Gastrocnemius medialis (tissue), 4 donors: ENCODE measurements at regions of chr20 and their contacts with region 1.

Region 1: GRCh38 chr20:3173610-3174441 is 477 bp upstream of the LZTS3 start:
- DNase-seq: peak; percentile 80 to 81
- ATAC-seq: peak; percentile 88 to 94
- H3K4me3 ChIP-seq: peak overlapping the region; percentile 85 to 98 (median 95)
- H3K27ac ChIP-seq: peak overlapping the region; percentile 85 to 95 (median 86)
- H3K4me1 ChIP-seq: peaks cover 5 to 22% of the 10 kb centered on the region in 2 donors
- H3K27me3 ChIP-seq: no peaks in the 10 kb centered on the region
- CTCF ChIP-seq: peak in 4 of 5 experiments; percentile 24 to 40 (median 29)
- POLR2A ChIP-seq: peak in 1 of 2 donors; percentile 22

Region 2: GRCh38 chr20:3045816-3046676 is 127.8 kb before region 1 on chr20 and contains the start of gene MRPS26:
- in situ Hi-C with region 1: loop called in 1 of 4 experiments (anchors 25 kb)
- intact Hi-C with region 1: loop called (anchors 5 kb)
- DNase-seq: peak; percentile 79 to 84
- ATAC-seq: peak; percentile 88 to 92
- H3K4me3 ChIP-seq: peak within 1 kb of the TSS; percentile 86 to 95 (median 92)
- H3K27ac ChIP-seq: peak within 1 kb of the TSS; percentile 87 to 96 (median 93)
- H3K4me1 ChIP-seq: peaks cover 11 to 22% of the 10 kb centered on the region in 2 donors
- H3K27me3 ChIP-seq: no peaks in the 10 kb centered on the region
- CTCF ChIP-seq: no peak
- POLR2A ChIP-seq: peak; percentile 61 to 70
- total RNA-seq, gene MRPS26: 58.7 to 69.8 (median 62.8) TPM

Region 3: GRCh38 chr20:3068986-3069900 is 104.6 kb before region 1 on chr20:
- in situ Hi-C with region 1: loop called in 1 of 4 experiments (anchors 25 kb)
- intact Hi-C with region 1: no loop called
- DNase-seq: peak in 1 of 2 donors; percentile 15
- ATAC-seq: peak; percentile 49 to 83
- H3K4me3 ChIP-seq: no peak overlapping the region
- H3K27ac ChIP-seq: no peak overlapping the region
- H3K4me1 ChIP-seq: no peaks in the 10 kb centered on the region
- H3K27me3 ChIP-seq: peaks cover 13 to 24% (median 19%) of the 10 kb centered on the region in 3 donors
- CTCF ChIP-seq: peak in 1 of 5 experiments; percentile 29
- POLR2A ChIP-seq: no peak

Region 4: DNA sequence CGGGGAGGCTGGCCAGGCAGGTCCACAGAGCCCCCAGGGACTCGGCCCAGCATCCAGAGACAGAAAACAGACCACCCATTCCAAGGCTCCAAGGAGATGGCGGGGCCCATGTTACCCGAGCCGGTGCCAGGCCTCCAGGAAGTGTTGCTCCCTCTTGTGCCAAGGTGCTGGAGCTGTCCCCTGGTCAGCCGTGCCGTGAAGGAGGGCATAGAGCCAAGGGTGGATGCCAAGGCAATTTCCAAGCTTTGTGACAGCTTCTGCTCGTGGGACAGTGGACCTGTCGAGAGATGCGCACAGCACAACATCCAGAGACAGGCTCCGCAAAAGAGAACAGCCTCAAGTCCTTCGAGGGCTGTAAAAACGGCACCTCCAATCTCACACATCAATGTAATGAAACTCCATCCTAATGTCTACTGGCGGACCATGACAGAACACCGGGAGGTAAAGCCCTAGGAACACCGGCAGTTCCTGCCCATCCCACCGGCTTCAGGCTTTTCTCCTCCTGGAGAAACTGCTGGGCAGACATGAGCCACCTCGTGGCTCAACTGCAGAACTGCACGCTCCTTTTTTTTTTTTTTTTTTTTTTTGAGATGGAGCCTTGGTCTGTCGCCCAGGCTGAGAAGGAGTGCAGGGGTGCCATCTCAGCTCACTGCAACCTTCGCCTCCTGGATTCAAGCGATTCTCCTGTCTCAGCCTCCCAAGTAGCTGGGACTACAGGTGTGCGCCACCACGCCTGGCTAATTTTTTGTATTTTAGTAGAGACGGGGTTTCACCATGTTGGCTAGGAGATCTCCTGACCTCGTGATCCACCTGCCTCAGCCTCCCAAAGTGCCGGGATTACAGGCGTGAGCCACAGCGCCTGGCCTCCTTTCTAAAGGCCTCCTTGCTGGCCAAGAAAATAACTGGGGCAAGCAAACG is 58.4 kb before region 1 on chr20:
- in situ Hi-C with region 1: no loop called
- intact Hi-C with region 1: loop called (anchors 1 kb)
- DNase-seq: peak in 1 of 2 donors; percentile 39
- ATAC-seq: peak; percentile 16 to 42
- H3K4me3 ChIP-seq: no peak overlapping the region
- H3K27ac ChIP-seq: no peak overlapping the region
- H3K4me1 ChIP-seq: peaks cover 4 to 16% of the 10 kb centered on the region in 2 donors
- H3K27me3 ChIP-seq: no peaks in the 10 kb centered on the region
- CTCF ChIP-seq: peak; percentile 43 to 82 (median 63)
- POLR2A ChIP-seq: no peak

Region 5: DNA sequence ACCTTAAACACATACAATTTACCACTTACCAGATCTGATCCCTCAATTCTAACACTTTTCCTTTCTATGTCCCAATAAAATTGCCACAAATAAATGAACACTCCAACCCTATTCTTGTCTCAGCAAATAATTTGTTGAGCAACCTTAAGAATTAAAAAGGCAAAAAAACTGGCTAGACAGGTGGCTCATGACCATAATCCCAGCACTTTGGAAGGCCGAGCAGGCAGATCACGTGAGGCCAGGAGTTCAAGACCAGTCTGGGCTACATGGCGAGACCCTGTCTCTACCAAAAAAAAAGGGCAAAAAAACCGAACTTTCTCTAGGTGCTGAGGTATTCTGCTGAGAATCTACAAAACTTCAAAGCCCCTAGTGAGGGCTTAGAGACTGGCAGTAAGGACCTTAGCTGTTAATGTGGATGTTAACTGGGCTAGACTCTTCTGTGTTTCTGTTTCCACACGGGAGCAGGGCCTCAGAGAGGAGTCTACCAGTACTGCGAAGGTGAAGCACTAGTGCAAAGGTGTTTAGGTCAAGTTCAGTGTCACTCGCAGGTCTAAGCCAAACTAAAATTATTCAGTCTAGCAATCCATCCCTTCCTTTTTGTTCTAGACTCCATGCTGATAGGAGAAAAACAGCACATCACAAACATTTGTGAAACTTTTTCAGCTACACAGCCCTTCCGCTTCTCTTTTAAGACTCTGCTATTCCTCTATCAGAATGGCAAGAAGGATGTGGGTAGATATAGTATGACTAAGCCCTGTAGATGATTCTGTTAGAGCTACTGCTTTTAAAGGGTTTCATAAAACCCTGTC is 16.8 kb before region 1 on chr20:
- in situ Hi-C with region 1: no loop called
- intact Hi-C with region 1: loop called (anchors 1 kb)
- DNase-seq: no peak
- ATAC-seq: no peak
- H3K4me3 ChIP-seq: peak overlapping the region; percentile 8 to 98 (median 90)
- H3K27ac ChIP-seq: peak overlapping the region; percentile 63 to 96 (median 92)
- H3K4me1 ChIP-seq: peaks cover 61 to 62% of the 10 kb centered on the region in 2 donors
- H3K27me3 ChIP-seq: no peaks in the 10 kb centered on the region
- CTCF ChIP-seq: no peak
- POLR2A ChIP-seq: no peak

Region 6: DNA sequence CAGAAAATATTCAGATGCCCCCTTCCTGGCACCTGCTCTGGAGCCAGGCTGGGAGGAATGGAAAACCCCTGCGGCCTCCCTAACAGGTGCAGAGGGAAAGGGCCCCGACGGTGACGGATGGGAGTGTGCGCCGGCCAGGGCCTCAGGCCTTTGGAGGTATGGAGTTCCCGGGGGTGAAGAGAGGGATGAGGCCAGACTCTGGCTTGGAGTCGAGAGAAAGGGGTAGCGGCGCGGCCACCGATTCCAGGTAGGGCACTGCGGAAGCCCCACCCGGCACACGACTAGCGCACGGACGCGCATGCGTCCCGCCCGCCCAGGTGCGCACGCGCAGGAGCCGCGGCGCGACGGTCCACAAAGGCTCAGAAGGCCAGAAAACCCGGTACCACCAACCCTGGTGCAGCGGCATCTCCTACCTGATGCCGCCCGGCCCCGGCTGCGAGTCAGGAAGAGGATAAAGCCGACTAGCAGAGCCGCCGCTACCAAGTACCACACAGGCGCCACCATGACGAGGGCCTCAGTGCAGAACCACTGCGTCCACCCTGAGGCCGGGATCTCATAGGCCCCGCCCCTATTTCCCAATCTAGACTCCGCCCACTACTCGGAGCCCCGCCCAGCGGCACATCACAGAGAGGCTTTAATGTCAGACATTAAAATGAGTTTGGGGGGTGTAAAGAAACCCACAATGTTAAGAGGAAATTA is 30.4 kb after region 1 on chr20 and contains the start of gene DDRGK1:
- in situ Hi-C with region 1: no loop called
- intact Hi-C with region 1: loop called (anchors 2 kb)
- DNase-seq: peak; percentile 67 to 87
- ATAC-seq: peak; percentile 95 to 97
- H3K4me3 ChIP-seq: peak within 1 kb of the TSS; percentile 74 to 92 (median 90)
- H3K27ac ChIP-seq: peak within 1 kb of the TSS; percentile 92 to 94 (median 94)
- H3K4me1 ChIP-seq: peaks cover 8 to 19% of the 10 kb centered on the region in 2 donors
- H3K27me3 ChIP-seq: no peaks in the 10 kb centered on the region
- CTCF ChIP-seq: no peak
- POLR2A ChIP-seq: peak; percentile 62 to 77
- total RNA-seq, gene DDRGK1: 55.2 to 75.7 (median 64.7) TPM